OCI-LY7 (cell line): ENCODE measurements at regions of chr5 and their contacts with region 1.

Region 1: DNA sequence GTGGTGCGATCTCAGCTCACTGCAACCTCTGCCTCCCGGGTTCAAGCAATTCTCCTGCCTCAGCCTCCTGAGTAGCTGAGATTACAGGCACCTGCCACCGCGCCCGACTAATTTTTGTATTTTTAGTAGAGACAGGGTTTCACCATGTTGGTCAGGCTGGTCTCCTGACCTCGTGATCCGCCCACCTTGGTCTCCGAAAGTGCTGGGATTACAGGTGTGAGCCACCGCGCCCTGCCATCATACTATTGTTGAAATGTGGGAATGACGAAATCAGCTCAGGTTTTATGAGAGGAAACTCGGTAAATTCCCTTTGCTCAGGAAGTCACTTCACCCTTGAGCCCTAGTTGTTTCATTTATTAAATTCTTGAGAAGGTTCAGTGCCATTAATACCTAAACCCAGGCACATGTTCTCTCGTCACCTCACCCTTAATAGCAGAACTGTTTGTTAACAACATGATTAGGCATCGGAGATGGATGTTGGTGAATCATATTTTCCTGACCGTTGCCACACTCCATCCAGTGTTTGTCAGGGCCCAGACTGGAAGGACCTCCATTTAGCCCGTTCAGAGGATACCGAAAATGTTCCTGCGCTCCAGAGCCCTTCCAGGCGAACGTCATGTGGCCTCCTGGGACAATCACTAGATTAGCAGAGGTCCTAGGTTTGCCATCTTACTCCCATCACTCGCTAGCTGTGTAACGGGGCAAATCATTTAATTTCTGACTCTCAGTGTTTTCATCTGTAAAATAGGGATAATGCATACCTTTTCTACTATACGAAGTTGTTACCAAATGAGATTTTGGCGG is 20.0 kb upstream of the CREBRF start:
- DNase-seq: peak; percentile 45
- H3K4me3 ChIP-seq: peak overlapping the region; percentile 61
- H3K27ac ChIP-seq: peak overlapping the region; percentile 96
- H3K4me1 ChIP-seq: peaks cover 54% of the 10 kb centered on the region
- CTCF ChIP-seq: no peak

Region 2: DNA sequence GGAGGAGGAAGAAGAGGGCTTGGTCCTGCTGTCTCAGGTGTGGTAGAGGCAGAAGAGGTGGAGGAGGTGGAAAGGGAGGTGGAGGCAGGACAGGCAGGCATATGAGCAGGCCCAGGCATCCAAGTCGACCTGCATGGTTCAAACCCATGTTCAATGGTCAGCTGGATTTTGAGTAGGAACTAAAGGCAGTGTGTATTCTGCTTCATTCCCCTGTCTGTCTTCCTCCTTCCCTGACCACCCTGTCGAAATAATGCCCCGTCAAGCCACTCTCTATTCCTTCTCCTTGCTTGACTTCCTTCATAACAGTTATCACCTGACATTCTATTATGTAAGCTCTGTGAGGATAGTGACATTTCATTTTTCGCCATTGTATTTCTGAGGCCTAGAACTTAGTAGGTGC is 17.7 kb before region 1 on chr5:
- CTCF ChIA-PET with region 1: no interaction called
- POLR2A ChIA-PET with region 1: interaction called, 12 read pairs
- intact Hi-C with region 1: no loop called
- DNase-seq: no peak
- H3K4me3 ChIP-seq: no peak overlapping the region
- H3K27ac ChIP-seq: no peak overlapping the region
- H3K4me1 ChIP-seq: peaks cover 5% of the 10 kb centered on the region
- CTCF ChIP-seq: no peak

Region 3: GRCh38 chr5:173051746-173052145 is 15.6 kb after region 1 on chr5:
- CTCF ChIA-PET with region 1: interaction called, 4 read pairs
- POLR2A ChIA-PET with region 1: interaction called, 53 read pairs
- intact Hi-C with region 1: loop called (anchors 1 kb)
- DNase-seq: no peak
- H3K4me3 ChIP-seq: no peak overlapping the region
- H3K27ac ChIP-seq: peak overlapping the region; percentile 57
- H3K4me1 ChIP-seq: peaks cover 42% of the 10 kb centered on the region
- CTCF ChIP-seq: no peak

Region 4: DNA sequence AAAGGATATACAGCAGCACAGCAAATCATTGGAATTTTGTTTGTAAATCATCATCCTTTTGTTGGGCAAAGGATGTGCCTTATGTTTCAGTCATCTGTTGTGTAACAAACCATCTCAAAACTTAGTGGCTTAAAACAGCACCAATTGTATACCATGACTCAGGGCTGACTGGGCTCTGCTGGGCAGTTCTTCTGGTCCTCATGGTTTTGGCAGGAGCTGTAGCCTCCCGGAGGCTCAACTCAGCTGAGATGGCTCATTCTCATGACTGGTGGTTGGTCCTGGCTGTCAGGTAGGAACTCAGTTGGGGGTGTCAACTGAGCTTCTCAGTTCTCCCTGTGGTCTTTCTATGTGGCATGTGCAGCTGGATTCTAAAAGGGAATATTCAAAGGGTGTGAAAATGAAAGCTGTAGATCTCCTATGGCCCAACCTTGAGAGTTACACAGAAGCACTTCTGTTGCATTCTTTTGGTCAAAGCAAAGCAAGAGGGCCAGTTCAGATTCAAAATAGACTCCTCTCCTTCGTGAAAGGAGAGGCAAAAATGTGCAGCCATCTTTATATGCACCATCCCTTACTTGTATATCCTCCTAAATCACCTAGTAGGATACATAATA is 813.0 kb after region 1 on chr5:
- CTCF ChIA-PET with region 1: no interaction called
- POLR2A ChIA-PET with region 1: no interaction called
- intact Hi-C with region 1: no loop called
- DNase-seq: no peak
- H3K4me3 ChIP-seq: no peak overlapping the region
- H3K27ac ChIP-seq: no peak overlapping the region
- H3K4me1 ChIP-seq: no peaks in the 10 kb centered on the region
- CTCF ChIP-seq: no peak